ENCODE measurements at regions of chr21 and their contacts with region 1.

Region 1: DNA sequence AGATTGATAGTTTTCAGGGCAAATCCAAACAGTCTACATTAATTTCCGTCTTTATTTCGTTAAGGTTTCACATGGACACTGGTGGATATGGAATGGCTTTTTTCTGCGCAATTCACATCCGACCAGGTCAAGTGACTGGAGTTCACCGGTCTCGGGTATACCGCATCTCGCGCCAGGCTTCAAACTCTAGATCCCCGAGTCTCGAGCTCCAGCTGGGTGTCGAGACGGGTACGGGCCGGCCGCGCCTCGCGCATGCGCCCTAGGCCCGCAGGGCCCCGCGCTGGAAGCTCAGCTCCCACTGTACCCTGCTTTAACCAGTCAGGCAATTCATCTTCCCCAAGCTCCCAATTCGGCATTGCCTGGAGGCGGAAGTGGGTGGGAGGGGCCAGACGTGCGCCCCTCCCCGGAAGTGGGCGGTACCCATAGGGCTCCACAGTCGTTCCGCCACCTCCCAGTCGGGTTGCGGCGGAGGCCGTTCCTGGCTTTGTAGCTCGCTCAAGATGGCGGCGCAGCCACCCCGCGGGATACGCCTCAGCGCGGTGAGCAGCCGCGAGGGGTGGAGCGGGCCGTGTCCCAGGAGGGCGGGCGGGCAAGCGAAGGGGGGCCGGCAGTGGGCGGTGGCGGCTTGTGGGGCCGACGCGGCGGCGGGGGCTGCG is at the start of gene MORC3:
- DNase-seq: peak; percentile 98
- H3K4me3 ChIP-seq: peak within 1 kb of the TSS; percentile 51
- H3K4me3 Mint-ChIP-seq: peak within 1 kb of the TSS; percentile 73
- H3K27ac Mint-ChIP-seq: peak within 1 kb of the TSS; percentile 75
- H3K4me1 ChIP-seq: peaks cover 4% of the 10 kb centered on the region; the same call in 1 of the 2 replicates
- H3K4me1 Mint-ChIP-seq: peaks cover 22% of the 10 kb centered on the region
- H3K27me3 ChIP-seq: no peaks in the 10 kb centered on the region
- H3K27me3 Mint-ChIP-seq: no peaks in the 10 kb centered on the region
- CTCF ChIP-seq: no peak
- total RNA-seq, gene MORC3: 21.6 and 23.3 TPM in 2 replicates

Region 2: GRCh38 chr21:35019631-35020032 is 1300.3 kb before region 1 on chr21:
- CTCF ChIA-PET with region 1: no interaction called
- POLR2A ChIA-PET with region 1: interaction called, 10 read pairs
- intact Hi-C with region 1: no loop called
- DNase-seq: peak; percentile 80 to 88
- H3K4me3 ChIP-seq: no peak overlapping the region
- H3K4me3 Mint-ChIP-seq: peak overlapping the region; percentile 48
- H3K27ac Mint-ChIP-seq: peak overlapping the region; percentile 70
- H3K4me1 ChIP-seq: peaks cover 51% of the 10 kb centered on the region
- H3K4me1 Mint-ChIP-seq: peaks cover 28% of the 10 kb centered on the region
- H3K27me3 ChIP-seq: no peaks in the 10 kb centered on the region
- H3K27me3 Mint-ChIP-seq: no peaks in the 10 kb centered on the region
- CTCF ChIP-seq: no peak

Region 3: GRCh38 chr21:36052860-36053714 is 266.8 kb before region 1 on chr21:
- CTCF ChIA-PET with region 1: no interaction called
- POLR2A ChIA-PET with region 1: no interaction called
- intact Hi-C with region 1: no loop called
- DNase-seq: no peak
- H3K4me3 ChIP-seq: no peak overlapping the region
- H3K4me3 Mint-ChIP-seq: no peak overlapping the region
- H3K27ac Mint-ChIP-seq: no peak overlapping the region
- H3K4me1 ChIP-seq: no peaks in the 10 kb centered on the region
- H3K4me1 Mint-ChIP-seq: no peaks in the 10 kb centered on the region
- H3K27me3 ChIP-seq: no peaks in the 10 kb centered on the region
- H3K27me3 Mint-ChIP-seq: no peaks in the 10 kb centered on the region
- CTCF ChIP-seq: no peak

Region 4: GRCh38 chr21:36203617-36203917 is 116.3 kb before region 1 on chr21:
- CTCF ChIA-PET with region 1: no interaction called
- POLR2A ChIA-PET with region 1: interaction called, 10 read pairs
- intact Hi-C with region 1: no loop called
- DNase-seq: peak in 1 of 2 experiments; percentile 54
- H3K4me3 ChIP-seq: no peak overlapping the region
- H3K4me3 Mint-ChIP-seq: no peak overlapping the region
- H3K27ac Mint-ChIP-seq: peak overlapping the region; percentile 84
- H3K4me1 ChIP-seq: peaks cover 37% of the 10 kb centered on the region
- H3K4me1 Mint-ChIP-seq: peaks cover 35% of the 10 kb centered on the region
- H3K27me3 ChIP-seq: no peaks in the 10 kb centered on the region
- H3K27me3 Mint-ChIP-seq: no peaks in the 10 kb centered on the region
- CTCF ChIP-seq: no peak

Region 5: DNA sequence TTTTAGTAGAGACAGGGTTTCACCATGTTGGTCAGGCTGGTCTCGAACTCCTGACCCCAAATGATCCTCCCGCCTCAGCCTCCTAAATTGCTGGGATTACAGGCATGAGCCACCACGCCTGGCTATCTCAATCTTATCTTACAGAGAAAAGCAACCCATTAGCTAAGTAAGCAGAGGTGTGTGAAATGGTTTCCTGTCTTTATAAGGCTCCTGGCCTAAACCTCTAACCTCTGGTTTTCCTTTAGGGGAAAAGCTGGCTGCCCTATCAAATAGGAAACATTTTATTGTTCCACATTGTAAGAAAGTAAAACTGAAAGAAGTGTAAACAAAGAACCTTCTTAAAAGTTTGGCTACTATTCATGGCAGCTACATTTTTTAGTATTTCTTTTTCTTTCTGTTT is 78.2 kb before region 1 on chr21:
- CTCF ChIA-PET with region 1: interaction called, 7 read pairs
- POLR2A ChIA-PET with region 1: interaction called, 12 read pairs
- intact Hi-C with region 1: loop called (anchors 5 kb)
- DNase-seq: no peak
- H3K4me3 ChIP-seq: no peak overlapping the region
- H3K4me3 Mint-ChIP-seq: no peak overlapping the region
- H3K27ac Mint-ChIP-seq: no peak overlapping the region
- H3K4me1 ChIP-seq: peaks cover 10% of the 10 kb centered on the region; the same call in 1 of the 2 replicates
- H3K4me1 Mint-ChIP-seq: no peaks in the 10 kb centered on the region
- H3K27me3 ChIP-seq: no peaks in the 10 kb centered on the region
- H3K27me3 Mint-ChIP-seq: no peaks in the 10 kb centered on the region
- CTCF ChIP-seq: no peak

Region 6: GRCh38 chr21:36297921-36298594 is 21.8 kb before region 1 on chr21:
- CTCF ChIA-PET with region 1: no interaction called
- POLR2A ChIA-PET with region 1: interaction called, 17 read pairs
- intact Hi-C with region 1: no loop called
- DNase-seq: peak; percentile 52 to 56
- H3K4me3 ChIP-seq: no peak overlapping the region
- H3K4me3 Mint-ChIP-seq: peak overlapping the region; percentile 48
- H3K27ac Mint-ChIP-seq: peak overlapping the region; percentile 97
- H3K4me1 ChIP-seq: peaks cover 15% of the 10 kb centered on the region
- H3K4me1 Mint-ChIP-seq: peaks cover 21% of the 10 kb centered on the region
- H3K27me3 ChIP-seq: no peaks in the 10 kb centered on the region
- H3K27me3 Mint-ChIP-seq: no peaks in the 10 kb centered on the region
- CTCF ChIP-seq: no peak

Region 7: GRCh38 chr21:36606287-36606982 is 286.5 kb after region 1 on chr21:
- CTCF ChIA-PET with region 1: no interaction called
- POLR2A ChIA-PET with region 1: no interaction called
- intact Hi-C with region 1: no loop called
- DNase-seq: no peak
- H3K4me3 ChIP-seq: no peak overlapping the region
- H3K4me3 Mint-ChIP-seq: no peak overlapping the region
- H3K27ac Mint-ChIP-seq: no peak overlapping the region
- H3K4me1 ChIP-seq: no peaks in the 10 kb centered on the region
- H3K4me1 Mint-ChIP-seq: no peaks in the 10 kb centered on the region
- H3K27me3 ChIP-seq: no peaks in the 10 kb centered on the region
- H3K27me3 Mint-ChIP-seq: peaks cover 3% of the 10 kb centered on the region
- CTCF ChIP-seq: peak; percentile 3 to 13